ENCODE measurements at regions of chr12 and their contacts with region 1.

Region 1: DNA sequence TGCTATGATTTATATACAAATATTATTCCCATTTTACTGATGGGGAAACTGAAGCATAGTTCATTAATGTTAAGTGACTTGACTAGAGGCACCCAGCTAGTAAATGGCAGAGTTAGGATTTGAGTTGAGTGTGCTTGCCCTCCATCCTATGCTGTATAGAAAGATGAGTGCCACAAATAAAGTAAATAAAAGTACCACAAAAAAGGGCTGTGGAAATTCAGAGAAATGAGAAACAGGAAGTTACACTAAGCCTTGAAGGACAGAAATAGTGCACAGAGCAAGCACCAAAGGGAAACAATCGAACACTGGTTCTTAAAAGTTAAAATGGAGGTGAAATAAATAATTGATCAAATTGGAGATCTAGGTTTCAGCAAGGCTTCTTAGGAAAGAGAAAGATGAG is 9.2 kb upstream of the ABCD2 start:
- DNase-seq: peak in 4 of 5 donors; percentile 42 to 52 (median 46)
- H3K4me3 ChIP-seq: no peak overlapping the region
- H3K4me3 Mint-ChIP-seq: peak overlapping the region; percentile 54 to 86 (median 68)
- H3K27ac ChIP-seq: peak overlapping the region; percentile 19
- H3K27ac Mint-ChIP-seq: peak overlapping the region; percentile 60 to 93 (median 89)
- H3K4me1 ChIP-seq: peaks cover 46% of the 10 kb centered on the region
- H3K4me1 Mint-ChIP-seq: peaks cover 31 to 52% (median 37%) of the 10 kb centered on the region in 4 donors
- H3K27me3 ChIP-seq: no peaks in the 10 kb centered on the region
- H3K27me3 Mint-ChIP-seq: no peaks in the 10 kb centered on the region

Region 2: GRCh38 chr12:39646963-39647362 is 18.1 kb after region 1 on chr12:
- CTCF ChIA-PET with region 1: no interaction called
- POLR2A ChIA-PET with region 1: interaction called, 6 read pairs
- intact Hi-C with region 1: loop called (anchors 2 kb)
- DNase-seq: no peak
- H3K4me3 ChIP-seq: no peak overlapping the region
- H3K4me3 Mint-ChIP-seq: no peak overlapping the region
- H3K27ac ChIP-seq: no peak overlapping the region
- H3K27ac Mint-ChIP-seq: no peak overlapping the region
- H3K4me1 ChIP-seq: no peaks in the 10 kb centered on the region
- H3K4me1 Mint-ChIP-seq: peaks cover 0 to 6% (median 4%) of the 10 kb centered on the region in 4 donors
- H3K27me3 ChIP-seq: no peaks in the 10 kb centered on the region
- H3K27me3 Mint-ChIP-seq: no peaks in the 10 kb centered on the region

Region 3: DNA sequence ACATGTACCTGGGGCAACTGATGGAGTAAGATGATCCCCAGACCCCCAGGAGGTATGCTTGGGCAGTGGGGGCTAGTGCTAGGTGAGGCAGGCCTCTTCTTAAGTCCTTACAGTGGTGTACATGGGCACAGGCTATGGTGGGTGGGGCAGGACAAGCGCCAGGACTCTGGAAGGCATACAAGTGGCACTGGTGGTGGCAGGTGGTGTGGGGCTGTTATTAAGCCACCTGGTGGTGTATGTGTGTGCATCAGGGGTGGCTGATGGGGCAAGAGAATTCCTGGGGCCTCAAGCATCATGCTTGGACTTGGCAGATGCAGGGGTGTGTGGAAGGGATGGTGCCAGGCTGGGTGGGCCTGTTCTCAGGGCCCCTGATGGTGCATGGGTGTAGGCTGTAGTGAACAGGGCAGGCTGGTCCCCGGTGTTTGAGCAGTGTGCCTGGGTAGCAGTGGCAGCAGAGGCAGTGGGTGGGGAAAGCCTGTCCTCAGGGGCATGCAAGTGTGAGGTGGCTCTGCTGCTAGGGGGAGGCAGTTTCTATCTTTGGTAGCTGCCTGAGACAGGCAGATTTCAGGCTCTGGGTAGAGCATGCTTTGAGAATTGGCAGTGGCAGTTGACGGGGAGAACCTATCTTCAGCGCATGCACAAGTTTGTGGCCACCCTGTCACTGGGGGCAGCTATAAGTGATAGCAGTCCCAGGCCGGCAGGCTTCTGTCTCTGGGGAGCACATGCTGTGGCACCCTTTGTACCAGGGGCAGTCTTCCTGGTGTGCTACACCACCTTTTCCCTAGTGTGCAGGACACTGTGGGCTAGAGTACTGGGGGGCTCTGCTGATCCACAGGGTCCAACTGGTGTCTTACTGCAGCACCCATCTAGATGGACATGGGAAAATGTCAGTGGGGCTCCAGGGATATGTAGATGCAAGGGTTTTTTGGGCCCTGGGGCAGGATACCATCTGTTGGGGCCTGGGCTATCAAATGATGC is 43.4 kb after region 1 on chr12:
- CTCF ChIA-PET with region 1: interaction called, 8 read pairs
- POLR2A ChIA-PET with region 1: interaction called, 17 read pairs
- intact Hi-C with region 1: no loop called
- DNase-seq: no peak
- H3K4me3 ChIP-seq: no peak overlapping the region
- H3K4me3 Mint-ChIP-seq: peak overlapping the region in 1 of 8 donors; percentile 27
- H3K27ac ChIP-seq: no peak overlapping the region
- H3K27ac Mint-ChIP-seq: peak overlapping the region in 3 of 7 donors; percentile 11 to 72 (median 36)
- H3K4me1 ChIP-seq: peaks cover 48% of the 10 kb centered on the region
- H3K4me1 Mint-ChIP-seq: peaks cover 31 to 74% (median 50%) of the 10 kb centered on the region in 4 donors
- H3K27me3 ChIP-seq: no peaks in the 10 kb centered on the region
- H3K27me3 Mint-ChIP-seq: no peaks in the 10 kb centered on the region

Region 4: DNA sequence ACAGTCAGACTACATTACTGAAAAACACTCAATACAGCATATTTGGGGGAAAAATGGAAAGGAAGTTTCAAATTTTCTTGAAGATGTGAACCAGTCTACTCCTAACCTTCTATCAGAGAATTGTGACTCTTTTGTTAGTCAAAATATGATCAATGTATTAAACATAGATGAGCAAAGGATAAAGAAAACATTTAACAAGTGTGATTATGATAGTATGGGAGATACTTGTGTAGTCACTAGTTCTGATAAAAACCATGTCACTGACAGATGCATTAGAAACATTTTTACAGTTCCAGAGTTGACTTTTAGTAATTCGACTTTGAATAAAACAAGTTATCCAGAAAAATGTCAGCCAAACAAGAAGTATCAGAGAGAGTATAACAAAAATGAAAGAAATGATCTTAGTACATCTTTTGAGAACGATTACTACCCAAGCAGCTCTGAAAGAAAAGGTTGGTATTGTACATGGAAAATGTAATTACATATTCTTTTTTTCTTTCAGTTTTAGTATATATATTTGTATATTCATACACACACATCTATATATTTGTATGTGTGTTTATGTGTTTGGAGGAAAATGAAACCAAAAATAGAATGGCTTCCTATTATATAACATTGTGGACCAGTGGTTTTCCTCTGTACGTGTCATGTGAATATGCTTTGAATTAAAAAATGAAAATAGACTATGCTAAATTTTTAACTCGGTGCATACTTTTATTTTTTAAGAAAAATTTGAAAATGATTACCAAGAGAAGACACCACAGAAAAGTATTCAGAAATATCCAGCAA is 54.0 kb after region 1 on chr12:
- CTCF ChIA-PET with region 1: no interaction called
- POLR2A ChIA-PET with region 1: interaction called, 13 read pairs
- intact Hi-C with region 1: no loop called
- DNase-seq: peak in 4 of 5 donors; percentile 57 to 73 (median 64)
- H3K4me3 ChIP-seq: peak overlapping the region; percentile 1 to 37
- H3K4me3 Mint-ChIP-seq: peak overlapping the region; percentile 78 to 92 (median 88)
- H3K27ac ChIP-seq: peak overlapping the region; percentile 80
- H3K27ac Mint-ChIP-seq: peak overlapping the region; percentile 86 to 100 (median 98)
- H3K4me1 ChIP-seq: peaks cover 43% of the 10 kb centered on the region
- H3K4me1 Mint-ChIP-seq: peaks cover 30 to 43% (median 37%) of the 10 kb centered on the region in 4 donors
- H3K27me3 ChIP-seq: no peaks in the 10 kb centered on the region
- H3K27me3 Mint-ChIP-seq: no peaks in the 10 kb centered on the region

Measured in CD4-positive, alpha-beta memory T cell (primary cell).